ENCODE measurements at regions of chr11 and their contacts with region 1.

Region 1: DNA sequence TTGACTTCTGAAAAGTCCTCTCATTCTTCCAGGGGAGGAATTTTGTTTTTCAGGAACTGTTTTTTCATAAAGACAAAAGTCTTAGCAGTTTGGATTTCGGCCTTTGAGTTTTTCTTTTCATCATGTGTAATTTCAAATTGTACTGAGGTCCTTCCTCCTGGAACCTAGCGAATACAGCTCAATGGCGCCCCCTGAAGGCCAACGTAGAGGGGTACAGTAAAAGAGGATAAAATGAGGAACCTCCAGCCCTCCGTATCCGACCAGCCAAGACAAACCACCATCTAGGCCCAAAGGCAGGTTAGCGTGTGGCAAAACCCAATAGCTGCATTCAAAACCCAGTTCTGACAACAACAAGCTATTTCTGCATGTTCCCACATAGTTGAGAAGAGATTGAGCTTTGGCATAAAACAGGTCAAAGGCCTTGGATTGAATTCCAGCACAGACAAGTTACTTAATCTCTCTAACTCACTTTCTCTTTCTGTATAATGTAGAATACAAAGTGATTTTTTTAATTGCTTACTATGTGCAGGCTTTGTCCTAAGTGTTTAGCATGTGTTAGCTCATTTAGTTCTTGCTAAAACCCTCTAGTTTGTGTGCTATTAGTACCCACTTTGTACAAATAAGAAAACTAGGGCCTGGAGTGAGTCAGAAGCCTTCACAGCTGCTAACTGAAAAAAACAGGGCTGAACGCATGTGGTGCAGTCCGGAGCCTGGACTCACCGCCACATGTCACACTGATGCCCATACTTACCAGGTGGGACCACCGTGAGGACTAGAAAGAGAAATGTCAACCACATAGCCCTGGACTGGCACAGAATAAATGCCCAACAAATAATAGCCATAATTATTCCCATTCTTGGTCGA is 43.2 kb upstream of the ETS1 start:
- DNase-seq: peak; percentile 93
- H3K4me3 Mint-ChIP-seq: peak overlapping the region; percentile 68
- H3K27ac Mint-ChIP-seq: peak overlapping the region; percentile 80
- H3K4me1 Mint-ChIP-seq: peaks cover 66% of the 10 kb centered on the region
- H3K27me3 Mint-ChIP-seq: peaks cover 3% of the 10 kb centered on the region

Region 2: DNA sequence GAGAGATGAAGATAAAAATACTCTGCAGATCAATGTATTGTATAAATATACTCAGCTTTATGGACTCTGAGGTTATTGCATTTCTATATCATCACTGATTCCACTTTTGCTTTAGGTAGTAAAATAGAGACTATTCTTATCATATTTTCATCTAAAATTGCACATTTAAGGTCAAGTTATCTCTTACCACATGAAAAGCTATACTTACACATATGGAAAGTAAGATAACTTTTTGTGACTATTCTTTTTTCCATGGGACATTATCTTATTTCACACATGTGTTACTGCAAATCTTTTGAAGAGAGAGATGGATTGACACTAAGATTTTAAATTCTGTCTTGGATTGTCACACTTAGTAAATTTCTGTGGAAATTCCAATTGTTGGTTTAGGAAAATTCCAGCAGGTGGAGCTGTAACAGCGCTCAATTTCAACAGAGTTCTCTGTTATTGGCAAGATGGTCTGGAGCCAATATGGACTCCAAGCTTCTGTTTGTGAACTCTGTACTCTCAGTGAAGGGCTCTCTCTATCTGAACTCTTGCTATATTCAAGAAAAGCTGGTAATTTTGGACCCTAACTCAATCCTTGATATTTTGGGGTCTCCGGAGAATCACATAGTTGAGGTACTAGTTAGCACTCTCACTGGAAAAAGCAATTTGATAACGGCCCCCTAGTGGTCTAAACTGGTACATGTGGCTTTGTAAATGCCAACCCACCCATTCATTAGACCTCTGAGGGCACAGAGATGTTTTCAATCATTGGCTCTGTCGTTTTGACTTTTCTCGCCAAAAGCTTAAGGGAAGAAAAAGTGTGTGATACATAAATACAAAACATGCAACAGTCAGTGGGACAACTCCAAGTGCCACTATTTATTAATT is 472.9 kb before region 1 on chr11:
- CTCF ChIA-PET with region 1: interaction called, 37 read pairs
- DNase-seq: peak; percentile 66
- H3K4me3 Mint-ChIP-seq: peak overlapping the region; percentile 60
- H3K27ac Mint-ChIP-seq: peak overlapping the region; percentile 63
- H3K4me1 Mint-ChIP-seq: peaks cover 7% of the 10 kb centered on the region
- H3K27me3 Mint-ChIP-seq: peaks cover 21% of the 10 kb centered on the region

Region 3: DNA sequence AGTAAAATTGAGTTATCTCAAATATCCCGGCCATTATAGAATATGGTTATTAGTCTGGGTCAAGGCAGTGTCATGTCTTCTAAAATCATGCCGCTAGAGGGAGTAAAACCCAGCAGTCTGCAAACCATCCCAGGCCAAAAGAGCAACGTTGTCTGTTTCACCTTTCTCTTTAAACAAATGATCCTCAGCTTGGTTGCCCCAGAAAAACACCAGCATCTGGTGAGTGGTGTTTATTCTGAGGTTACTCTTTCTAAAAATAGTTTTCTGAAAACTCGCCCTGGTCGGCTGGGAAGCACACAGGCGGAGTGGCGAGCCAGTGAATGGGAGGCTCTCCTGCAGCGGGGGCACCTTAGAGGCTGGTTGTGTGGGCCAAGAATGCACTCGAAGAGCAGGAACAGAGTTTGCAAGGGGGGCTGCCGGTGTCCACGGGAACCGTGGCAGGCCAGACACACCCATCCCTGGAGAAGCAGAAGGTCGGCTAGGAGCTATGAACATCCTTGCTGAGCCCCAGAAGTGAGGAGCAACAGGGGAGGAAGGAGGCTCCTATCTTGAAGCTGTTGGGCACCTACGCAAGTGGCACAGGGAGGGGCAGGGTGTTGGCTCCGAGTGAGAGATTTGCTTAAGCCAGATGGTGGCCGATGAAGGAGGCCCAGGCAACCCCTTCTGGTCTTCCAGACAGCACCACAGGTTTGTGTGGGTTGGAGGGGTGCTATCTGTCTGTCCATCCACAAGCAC is 340.3 kb before region 1 on chr11:
- CTCF ChIA-PET with region 1: interaction called, 134 read pairs
- DNase-seq: peak; percentile 82
- H3K4me3 Mint-ChIP-seq: peak overlapping the region; percentile 85
- H3K27ac Mint-ChIP-seq: peak overlapping the region; percentile 96
- H3K4me1 Mint-ChIP-seq: peaks cover 92% of the 10 kb centered on the region
- H3K27me3 Mint-ChIP-seq: no peaks in the 10 kb centered on the region

Region 4: DNA sequence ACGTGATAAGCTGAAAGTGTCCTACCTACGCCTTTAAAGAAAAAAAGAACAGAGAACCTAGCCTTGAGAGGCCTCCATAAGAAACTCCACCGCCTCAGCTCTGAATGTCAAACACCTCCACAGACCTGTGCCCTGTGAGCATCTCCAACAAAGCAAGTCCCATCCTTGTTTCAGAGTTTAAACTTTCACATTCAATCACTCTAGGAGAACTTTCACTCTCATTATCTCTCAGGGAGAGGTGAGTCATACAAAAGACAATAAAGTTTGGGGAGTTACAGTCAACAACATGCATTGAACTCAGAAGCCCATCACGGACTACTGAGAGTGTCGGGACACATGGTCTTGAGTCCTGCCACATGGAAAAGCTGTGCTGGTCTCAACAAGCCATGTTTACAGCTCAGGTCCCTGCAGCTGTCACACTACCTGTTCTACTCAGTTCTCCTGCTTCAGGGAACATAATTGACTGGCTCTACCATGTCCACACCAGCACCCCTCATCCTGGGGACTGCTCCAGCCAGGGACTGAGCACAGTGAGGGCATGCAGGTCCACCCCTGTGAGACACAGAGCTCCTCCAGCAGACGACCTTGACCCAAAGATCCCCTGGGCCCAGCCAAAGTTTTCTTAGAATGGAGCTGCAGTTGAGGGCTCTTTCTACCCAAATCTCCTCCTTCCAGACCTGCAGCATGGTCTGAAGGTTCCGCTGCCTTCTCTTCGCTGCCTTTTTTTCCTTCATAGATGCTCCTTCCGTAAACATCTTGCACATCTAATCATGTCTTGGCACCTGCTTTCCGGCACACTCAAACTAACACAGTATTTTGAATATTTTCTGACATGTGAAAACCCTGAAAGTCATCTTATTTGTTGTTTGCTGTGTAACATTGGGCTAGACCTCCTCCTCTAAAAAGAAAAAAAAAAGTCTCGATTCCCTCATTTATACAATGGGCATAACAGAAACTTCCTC is 158.2 kb before region 1 on chr11:
- CTCF ChIA-PET with region 1: interaction called, 14 read pairs
- DNase-seq: peak; percentile 78
- H3K4me3 Mint-ChIP-seq: peak overlapping the region; percentile 47
- H3K27ac Mint-ChIP-seq: peak overlapping the region; percentile 92
- H3K4me1 Mint-ChIP-seq: peaks cover 98% of the 10 kb centered on the region
- H3K27me3 Mint-ChIP-seq: no peaks in the 10 kb centered on the region

Region 5: GRCh38 chr11:128506999-128507611 is 123.5 kb before region 1 on chr11:
- CTCF ChIA-PET with region 1: interaction called, 108 read pairs
- DNase-seq: peak; percentile 51
- H3K4me3 Mint-ChIP-seq: peak overlapping the region; percentile 96
- H3K27ac Mint-ChIP-seq: peak overlapping the region; percentile 95
- H3K4me1 Mint-ChIP-seq: peaks cover 99% of the 10 kb centered on the region
- H3K27me3 Mint-ChIP-seq: no peaks in the 10 kb centered on the region

Region 6: DNA sequence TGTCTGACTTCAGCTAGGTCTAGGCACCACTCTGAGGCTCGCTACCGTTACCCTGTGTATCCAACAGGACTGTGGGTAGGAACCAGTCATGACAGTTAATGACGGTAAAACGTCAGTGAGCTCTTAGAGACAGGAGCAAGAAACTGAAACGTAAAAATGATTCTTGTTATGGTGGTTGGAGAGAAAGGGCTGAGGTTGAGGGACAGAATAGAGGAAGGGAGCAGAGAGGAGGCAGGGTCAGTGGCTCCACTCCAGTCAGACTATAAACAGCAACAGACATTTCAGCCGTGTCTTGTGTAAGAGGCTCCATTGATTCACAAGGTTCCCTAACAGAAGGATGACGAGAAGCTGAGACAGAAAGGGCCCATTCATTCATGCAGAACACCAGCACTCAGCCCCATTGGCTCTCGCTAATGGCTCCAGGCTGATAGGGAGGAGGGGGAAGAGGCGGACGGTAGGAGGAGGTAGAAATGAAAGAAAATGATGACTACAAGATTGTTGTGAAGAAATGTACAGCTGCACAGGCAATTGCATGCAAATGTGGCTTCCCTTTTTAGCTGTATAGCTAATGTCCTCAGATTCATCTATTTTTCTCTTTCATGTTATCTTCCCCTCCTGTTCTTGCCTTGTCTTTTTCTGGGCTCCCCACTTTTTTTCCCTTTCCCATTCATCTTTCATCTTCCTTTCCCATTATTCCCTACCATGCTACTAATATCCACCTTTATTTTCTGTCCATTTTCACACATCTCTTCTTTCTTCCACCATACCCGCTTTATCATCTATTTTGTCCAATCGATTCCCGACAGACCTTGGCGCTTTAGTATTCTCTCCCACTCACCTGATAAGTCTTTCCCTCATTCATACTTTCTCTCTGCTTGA is 77.6 kb before region 1 on chr11:
- CTCF ChIA-PET with region 1: interaction called, 10 read pairs
- DNase-seq: no peak
- H3K4me3 Mint-ChIP-seq: no peak overlapping the region
- H3K27ac Mint-ChIP-seq: peak overlapping the region; percentile 82
- H3K4me1 Mint-ChIP-seq: peaks cover 59% of the 10 kb centered on the region
- H3K27me3 Mint-ChIP-seq: peaks cover under 1% of the 10 kb centered on the region

Region 7: GRCh38 chr11:128848815-128849455 is 218.3 kb after region 1 on chr11:
- CTCF ChIA-PET with region 1: interaction called, 16 read pairs
- DNase-seq: peak; percentile 71
- H3K4me3 Mint-ChIP-seq: no peak overlapping the region
- H3K27ac Mint-ChIP-seq: no peak overlapping the region
- H3K4me1 Mint-ChIP-seq: peaks cover 31% of the 10 kb centered on the region
- H3K27me3 Mint-ChIP-seq: peaks cover 7% of the 10 kb centered on the region